ENCODE measurements at regions of chr1 and their contacts with region 1.

Region 1: GRCh38 chr1:10507111-10507879 is 32.5 kb downstream of the PEX14 start:
- DNase-seq: peak in 34 of 35 experiments; percentile 16 to 69 (median 44)
- ATAC-seq: peak; percentile 29 to 62 (median 35)
- H3K4me3 ChIP-seq: no peak overlapping the region
- H3K4me3 Mint-ChIP-seq: no peak overlapping the region
- H3K27ac ChIP-seq: no peak overlapping the region
- H3K27ac Mint-ChIP-seq: peak overlapping the region; percentile 78 to 79
- H3K4me1 ChIP-seq: peaks cover 23 to 43% of the 10 kb centered on the region in 2 experiments
- H3K4me1 Mint-ChIP-seq: peaks cover 43 to 58% (median 46%) of the 10 kb centered on the region in 3 donors
- H3K27me3 ChIP-seq: no peaks in the 10 kb centered on the region
- H3K27me3 Mint-ChIP-seq: no peaks in the 10 kb centered on the region

Region 2: DNA sequence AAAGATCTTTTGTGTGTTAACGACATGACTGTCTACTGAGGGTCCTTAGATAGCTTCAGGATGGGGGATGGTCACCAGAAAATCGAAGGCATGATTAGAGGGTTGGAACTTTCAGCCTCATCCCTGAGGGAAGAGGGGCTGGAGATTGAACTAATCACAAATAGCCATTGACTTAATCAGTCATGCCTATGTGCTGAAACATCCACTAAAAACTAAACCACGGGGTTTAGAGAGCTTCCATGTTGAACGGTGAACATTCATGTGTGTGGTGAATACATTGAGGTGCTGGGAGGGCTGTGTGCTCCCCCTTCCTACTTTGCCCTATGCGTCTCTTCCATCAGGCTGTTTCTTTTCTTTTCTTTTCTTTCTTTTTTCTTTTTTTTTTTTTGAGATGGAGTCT is 493.3 kb before region 1 on chr1:
- CTCF ChIA-PET with region 1: no interaction called
- POLR2A ChIA-PET with region 1: interaction called in 1 of 2 experiments, 14 read pairs
- DNase-seq: no peak
- ATAC-seq: no peak
- H3K4me3 ChIP-seq: no peak overlapping the region
- H3K4me3 Mint-ChIP-seq: no peak overlapping the region
- H3K27ac ChIP-seq: no peak overlapping the region
- H3K27ac Mint-ChIP-seq: no peak overlapping the region
- H3K4me1 ChIP-seq: no peaks in the 10 kb centered on the region
- H3K4me1 Mint-ChIP-seq: peaks cover 0 to 2% (median under 1%) of the 10 kb centered on the region in 3 donors
- H3K27me3 ChIP-seq: no peaks in the 10 kb centered on the region
- H3K27me3 Mint-ChIP-seq: peaks cover 0 to 2% of the 10 kb centered on the region in 2 donors

Measured in T-cell (primary cell).